PC-9 (cell line): ENCODE measurements at regions of chr1 and their contacts with region 1.

Region 1: DNA sequence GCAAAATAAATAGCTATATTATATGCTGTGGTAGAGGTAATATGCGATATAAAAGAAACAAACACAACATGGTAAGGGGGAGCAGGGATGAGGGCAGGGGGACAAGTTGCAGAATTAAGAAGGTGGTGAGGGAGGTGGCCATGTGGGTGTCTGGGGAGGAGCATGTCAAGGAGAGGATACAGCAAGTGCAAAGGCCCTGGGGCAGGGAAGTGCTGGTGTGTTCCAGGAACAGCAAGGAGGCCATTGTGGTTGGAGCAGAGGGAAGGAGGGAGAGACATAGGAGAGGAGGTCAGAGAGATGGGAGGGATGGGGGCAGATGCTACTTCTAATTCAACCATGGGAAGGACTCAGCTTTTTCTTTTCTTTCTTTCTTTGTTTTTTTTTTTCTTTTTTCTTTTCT is 161.2 kb upstream of the IGSF21 start:
- DNase-seq: no peak
- H3K4me3 ChIP-seq: no peak overlapping the region
- H3K27ac ChIP-seq: no peak overlapping the region
- H3K4me1 ChIP-seq: no peaks in the 10 kb centered on the region
- H3K27me3 ChIP-seq: peaks cover 30% of the 10 kb centered on the region
- CTCF ChIP-seq: no peak

Region 2: DNA sequence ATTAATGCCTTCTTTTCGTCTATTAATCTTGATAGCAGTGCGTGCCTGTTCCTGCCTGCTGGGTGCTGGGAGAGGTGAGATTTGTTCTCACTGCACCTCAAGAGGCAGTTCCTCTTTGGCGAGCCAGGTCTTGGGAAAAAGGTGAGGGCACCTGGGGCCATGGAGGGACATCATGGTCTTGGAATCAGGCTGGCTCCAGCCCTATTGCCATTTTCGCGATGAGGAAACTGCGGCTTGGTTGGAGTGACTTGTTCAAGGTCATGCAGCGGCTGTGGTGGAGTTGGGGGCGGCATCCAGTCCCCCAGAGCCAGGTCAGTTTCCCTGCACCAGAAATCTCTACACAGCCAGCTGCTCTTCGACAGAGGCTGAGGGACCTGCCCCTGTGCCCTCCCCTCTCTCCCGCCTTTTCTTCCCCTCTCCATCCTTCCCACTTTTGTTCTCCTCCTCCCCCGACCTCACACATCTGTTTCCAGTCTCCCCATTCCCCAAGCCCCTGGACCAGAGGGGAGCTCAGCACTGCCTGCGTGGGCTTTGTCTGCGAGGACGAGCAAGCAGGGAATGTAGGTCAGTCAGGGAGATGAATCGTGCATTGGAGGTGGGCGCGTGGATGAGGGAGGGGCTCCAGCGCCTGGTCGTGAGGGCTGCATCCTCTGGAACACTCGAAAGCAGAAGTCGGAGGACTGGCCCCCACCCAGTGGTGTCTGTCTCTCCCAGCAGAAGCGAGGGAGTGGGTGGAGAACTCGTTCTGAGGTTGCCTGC is 56.2 kb before region 1 on chr1:
- CTCF ChIA-PET with region 1: no interaction called
- POLR2A ChIA-PET with region 1: interaction called, 16 read pairs
- intact Hi-C with region 1: no loop called
- DNase-seq: no peak
- H3K4me3 ChIP-seq: no peak overlapping the region
- H3K27ac ChIP-seq: no peak overlapping the region
- H3K4me1 ChIP-seq: no peaks in the 10 kb centered on the region
- H3K27me3 ChIP-seq: peaks cover 69% of the 10 kb centered on the region
- CTCF ChIP-seq: no peak